MCF 10A (cell line): ENCODE measurements at regions of chr11 and their contacts with region 1.

Region 1: GRCh38 chr11:2420502-2421225 is 20.1 kb downstream of the TSSC4 start:
- DNase-seq: peak; percentile 64
- H3K4me3 Mint-ChIP-seq: no peak overlapping the region
- H3K27ac Mint-ChIP-seq: no peak overlapping the region
- H3K4me1 Mint-ChIP-seq: no peaks in the 10 kb centered on the region
- H3K27me3 Mint-ChIP-seq: no peaks in the 10 kb centered on the region
- CTCF ChIP-seq: peak; percentile 93

Region 2: GRCh38 chr11:1546077-1546535 is 874.6 kb before region 1 on chr11:
- CTCF ChIA-PET with region 1: no interaction called
- POLR2A ChIA-PET with region 1: no interaction called
- intact Hi-C with region 1: no loop called
- DNase-seq: no peak
- H3K4me3 Mint-ChIP-seq: peak overlapping the region; percentile 12
- H3K27ac Mint-ChIP-seq: no peak overlapping the region
- H3K4me1 Mint-ChIP-seq: no peaks in the 10 kb centered on the region
- H3K27me3 Mint-ChIP-seq: no peaks in the 10 kb centered on the region
- CTCF ChIP-seq: no peak

Region 3: DNA sequence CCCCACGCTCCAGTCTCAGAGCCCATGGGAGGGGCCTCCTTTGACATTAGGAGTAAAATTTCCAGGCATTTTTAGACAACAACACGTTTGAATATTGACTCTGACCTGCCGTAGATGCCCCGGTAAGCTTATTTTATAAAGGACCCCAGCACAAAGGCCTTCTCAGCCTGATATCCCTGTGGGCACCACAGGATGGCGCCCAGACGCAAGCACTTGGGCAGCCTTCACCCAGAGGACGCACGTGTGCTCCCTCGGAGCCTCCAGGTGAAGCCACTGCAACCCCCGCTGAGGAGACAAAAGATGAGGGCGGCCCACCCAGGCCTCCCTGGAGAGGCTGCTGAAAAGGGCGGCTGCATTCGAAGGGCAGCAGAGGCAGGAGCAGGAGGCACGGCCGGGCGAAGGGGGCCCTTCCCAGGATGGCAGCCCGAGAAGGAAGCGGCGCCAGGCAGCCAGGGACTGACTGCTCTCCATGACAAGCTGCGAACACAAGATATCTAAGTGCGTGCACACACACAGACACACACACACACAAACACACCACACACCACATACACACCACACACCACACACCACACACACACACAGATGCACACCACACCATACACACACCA is 233.9 kb before region 1 on chr11:
- CTCF ChIA-PET with region 1: interaction called, 34 read pairs
- POLR2A ChIA-PET with region 1: no interaction called
- intact Hi-C with region 1: no loop called
- DNase-seq: peak; percentile 25
- H3K4me3 Mint-ChIP-seq: no peak overlapping the region
- H3K27ac Mint-ChIP-seq: no peak overlapping the region
- H3K4me1 Mint-ChIP-seq: peaks cover 21% of the 10 kb centered on the region
- H3K27me3 Mint-ChIP-seq: no peaks in the 10 kb centered on the region
- CTCF ChIP-seq: peak; percentile 36

Region 4: GRCh38 chr11:2202055-2202899 is 218.4 kb before region 1 on chr11:
- CTCF ChIA-PET with region 1: interaction called, 32 read pairs
- POLR2A ChIA-PET with region 1: interaction called, 3 read pairs
- intact Hi-C with region 1: loop called (anchors 1 kb)
- DNase-seq: peak; percentile 14
- H3K4me3 Mint-ChIP-seq: no peak overlapping the region
- H3K27ac Mint-ChIP-seq: no peak overlapping the region
- H3K4me1 Mint-ChIP-seq: peaks cover 6% of the 10 kb centered on the region
- H3K27me3 Mint-ChIP-seq: peaks cover 4% of the 10 kb centered on the region
- CTCF ChIP-seq: no peak

Region 5: DNA sequence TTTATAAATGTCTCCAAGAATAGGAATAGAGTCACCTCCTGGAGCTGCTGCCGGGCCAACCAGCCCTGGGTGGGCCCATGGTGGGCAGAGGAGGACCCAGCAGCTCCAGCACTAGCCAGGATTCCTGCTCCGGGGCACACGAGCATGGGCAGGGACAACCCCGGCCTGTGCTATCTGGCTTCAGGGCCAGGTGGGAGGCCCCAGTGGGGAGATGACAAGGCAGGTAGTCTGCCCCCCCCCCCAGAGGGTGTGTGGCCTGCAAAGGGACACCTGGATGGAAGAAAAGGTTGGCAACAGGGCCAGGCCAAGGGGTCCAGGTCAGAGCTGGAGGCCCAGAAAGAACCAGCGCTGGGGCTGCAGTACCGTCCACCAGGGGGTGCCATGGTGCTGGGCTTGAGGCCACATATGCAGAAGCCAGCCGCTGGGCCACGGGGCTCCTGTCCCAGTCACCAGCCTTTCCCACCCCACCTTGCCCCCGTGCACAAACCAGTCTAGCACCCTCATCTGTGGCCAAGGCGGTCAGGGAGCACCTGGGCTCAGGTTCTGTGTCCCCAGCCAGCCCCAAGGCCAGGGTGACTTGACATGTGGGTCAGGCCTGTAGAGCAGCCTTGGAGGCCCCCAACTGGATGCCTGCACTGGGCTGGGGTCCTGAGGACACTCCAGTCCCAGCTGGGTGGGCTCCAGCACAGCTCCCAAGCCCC is 115.4 kb before region 1 on chr11:
- CTCF ChIA-PET with region 1: interaction called, 240 read pairs
- POLR2A ChIA-PET with region 1: interaction called, 14 read pairs
- intact Hi-C with region 1: loop called (anchors 1 kb)
- DNase-seq: peak; percentile 67
- H3K4me3 Mint-ChIP-seq: no peak overlapping the region
- H3K27ac Mint-ChIP-seq: no peak overlapping the region
- H3K4me1 Mint-ChIP-seq: peaks cover 7% of the 10 kb centered on the region
- H3K27me3 Mint-ChIP-seq: no peaks in the 10 kb centered on the region
- CTCF ChIP-seq: peak; percentile 77

Region 6: GRCh38 chr11:2400069-2400760 is 20.4 kb before region 1 on chr11 and contains the start of gene TSSC4:
- CTCF ChIA-PET with region 1: interaction called, 28 read pairs
- POLR2A ChIA-PET with region 1: interaction called, 6 read pairs
- intact Hi-C with region 1: loop called (anchors 1 kb)
- DNase-seq: peak; percentile 100
- H3K4me3 Mint-ChIP-seq: peak within 1 kb of the TSS; percentile 86
- H3K27ac Mint-ChIP-seq: peak within 1 kb of the TSS; percentile 94
- H3K4me1 Mint-ChIP-seq: no peaks in the 10 kb centered on the region
- H3K27me3 Mint-ChIP-seq: no peaks in the 10 kb centered on the region
- CTCF ChIP-seq: peak; percentile 95
- total RNA-seq, gene TSSC4: 69.9 and 70.3 TPM in 2 replicates

Region 7: DNA sequence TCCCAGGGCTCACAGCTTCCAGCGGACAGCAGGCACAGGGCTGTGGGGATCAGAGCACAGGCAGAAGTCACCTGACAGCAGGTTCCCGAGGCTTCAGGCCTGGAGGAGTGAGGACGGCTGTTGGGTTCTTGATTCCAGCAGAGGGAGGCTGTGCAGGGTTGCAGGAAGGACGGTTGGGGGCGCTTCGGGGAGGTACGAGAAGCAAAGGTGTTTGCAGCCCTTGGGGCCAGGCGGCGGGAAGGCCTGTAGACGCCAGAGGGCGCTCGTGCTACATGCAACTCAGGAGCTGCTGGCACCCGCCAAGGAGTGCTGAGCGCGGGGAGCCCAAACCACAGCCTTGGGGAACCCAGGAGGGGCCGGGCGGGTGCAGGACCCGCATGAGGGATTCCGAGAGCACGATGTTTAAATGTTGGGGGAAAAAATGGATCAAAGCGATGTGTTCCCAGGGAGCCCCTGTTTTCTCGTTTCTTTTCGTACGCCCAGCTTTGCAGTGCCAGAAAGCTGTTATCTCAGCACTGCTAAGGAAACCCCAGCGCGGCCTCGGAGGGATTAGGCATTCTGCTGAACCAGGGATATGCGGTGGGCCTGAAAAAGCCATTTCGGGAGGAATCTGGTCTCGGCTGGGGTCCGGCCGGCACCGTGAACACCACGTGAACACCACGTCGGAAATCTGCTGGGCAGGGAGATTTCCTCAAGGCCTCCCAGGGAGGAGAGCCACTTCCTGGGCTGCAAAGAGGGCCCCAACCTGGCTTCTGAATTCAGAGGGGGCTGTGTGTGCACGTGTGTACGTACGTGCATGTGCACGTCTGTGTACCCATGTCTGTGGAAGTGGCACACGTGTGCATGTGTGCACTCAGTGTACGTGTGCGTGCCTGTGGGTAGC is 112.3 kb after region 1 on chr11:
- CTCF ChIA-PET with region 1: interaction called, 76 read pairs
- POLR2A ChIA-PET with region 1: no interaction called
- intact Hi-C with region 1: no loop called
- DNase-seq: peak; percentile 89
- H3K4me3 Mint-ChIP-seq: peak overlapping the region; percentile 64
- H3K27ac Mint-ChIP-seq: peak overlapping the region; percentile 42
- H3K4me1 Mint-ChIP-seq: peaks cover 19% of the 10 kb centered on the region
- H3K27me3 Mint-ChIP-seq: no peaks in the 10 kb centered on the region
- CTCF ChIP-seq: peak; percentile 98

Region 8: GRCh38 chr11:2621894-2622293 is 201.2 kb after region 1 on chr11:
- CTCF ChIA-PET with region 1: no interaction called
- POLR2A ChIA-PET with region 1: no interaction called
- intact Hi-C with region 1: no loop called
- DNase-seq: no peak
- H3K4me3 Mint-ChIP-seq: no peak overlapping the region
- H3K27ac Mint-ChIP-seq: no peak overlapping the region
- H3K4me1 Mint-ChIP-seq: no peaks in the 10 kb centered on the region
- H3K27me3 Mint-ChIP-seq: peaks cover 84% of the 10 kb centered on the region
- CTCF ChIP-seq: no peak